BJ (cell line): ENCODE measurements at regions of chr1 and their contacts with region 1.

Region 1: GRCh38 chr1:235901461-235901860 is 34.8 kb upstream of the LYST start:
- DNase-seq: peak; percentile 84
- H3K4me3 ChIP-seq: no peak overlapping the region
- H3K27me3 ChIP-seq: no peaks in the 10 kb centered on the region
- CTCF ChIP-seq: no peak

Region 2: DNA sequence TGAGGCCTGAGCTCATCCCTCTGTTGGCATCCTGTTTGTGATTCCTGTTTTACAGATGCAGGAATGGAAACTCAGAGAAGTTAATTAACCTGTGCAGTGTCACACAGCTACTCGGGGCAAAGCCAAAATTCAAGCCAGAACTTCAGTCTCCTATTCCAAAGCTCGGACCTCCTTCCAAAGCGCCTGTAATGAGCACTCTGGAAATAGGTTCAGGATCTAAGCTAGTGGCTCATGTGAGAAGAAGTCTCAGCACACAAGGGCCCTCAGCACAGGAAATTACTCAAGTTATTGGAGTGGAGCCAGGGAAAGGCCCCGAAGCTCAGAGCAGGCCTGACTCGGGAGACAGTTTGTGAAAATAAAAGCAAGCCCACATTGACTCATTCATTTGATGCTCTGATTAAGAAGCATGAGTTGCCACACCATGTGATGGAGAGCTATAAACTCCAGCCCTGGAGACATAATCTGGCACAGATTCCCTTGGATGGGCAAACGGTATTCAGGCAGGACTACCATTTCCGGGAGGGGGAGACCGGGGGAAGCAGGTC is 15.9 kb after region 1 on chr1:
- CTCF ChIA-PET with region 1: interaction called, 10 read pairs
- POLR2A ChIA-PET with region 1: no interaction called
- DNase-seq: peak; percentile 98
- H3K4me3 ChIP-seq: no peak overlapping the region
- H3K27me3 ChIP-seq: no peaks in the 10 kb centered on the region
- CTCF ChIP-seq: no peak